ENCODE measurements at regions of chr1 and their contacts with region 1.

Region 1: DNA sequence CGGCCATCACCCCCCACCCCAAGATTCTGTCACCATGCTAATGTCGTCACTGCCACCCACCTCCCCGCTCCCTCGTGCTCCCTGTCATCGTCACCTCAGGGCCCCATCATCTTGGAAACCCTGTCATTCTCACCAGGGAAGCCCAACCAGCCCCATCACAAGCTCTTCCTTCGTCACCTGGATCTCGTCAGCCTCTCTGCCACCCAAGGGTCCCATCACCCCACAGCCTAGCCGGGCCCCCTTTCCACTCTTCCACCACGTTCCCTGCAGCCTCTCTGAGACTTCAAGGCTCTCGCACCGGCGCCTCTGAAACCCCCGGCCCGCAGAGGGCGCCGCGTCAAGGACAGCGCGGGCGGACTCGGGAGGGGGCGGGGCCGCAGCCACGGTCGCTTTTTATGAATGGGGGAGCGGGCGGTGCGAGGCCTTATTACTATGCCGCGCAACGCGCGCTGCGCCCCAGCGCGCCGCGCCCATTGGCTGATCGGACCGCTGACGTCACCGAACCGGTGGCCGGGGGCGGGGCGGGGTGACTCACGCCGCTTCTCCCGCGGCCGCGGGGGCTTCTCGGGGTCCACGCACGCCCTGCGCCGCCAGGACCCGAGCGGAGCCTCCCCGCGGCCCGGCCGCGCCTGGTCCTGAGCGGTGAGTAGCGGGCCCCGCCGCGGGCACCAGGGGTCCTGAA is at the start of gene GPR3:
- DNase-seq: peak; percentile 92
- ATAC-seq: peak; percentile 87
- H3K4me3 ChIP-seq: peak within 1 kb of the TSS; percentile 48
- H3K27ac ChIP-seq: peak within 1 kb of the TSS; percentile 55
- H3K4me1 ChIP-seq: peaks cover 32% of the 10 kb centered on the region
- H3K27me3 ChIP-seq: no peaks in the 10 kb centered on the region
- CTCF ChIP-seq: peak; percentile 57
- total RNA-seq, gene GPR3: 0.90 TPM

Region 2: GRCh38 chr1:27097484-27097917 is 294.7 kb before region 1 on chr1:
- intact Hi-C with region 1: no loop called
- DNase-seq: peak; percentile 87
- ATAC-seq: peak; percentile 84
- H3K4me3 ChIP-seq: no peak overlapping the region
- H3K27ac ChIP-seq: peak overlapping the region; percentile 76
- H3K4me1 ChIP-seq: peaks cover 27% of the 10 kb centered on the region
- H3K27me3 ChIP-seq: no peaks in the 10 kb centered on the region
- CTCF ChIP-seq: peak; percentile 98

Region 3: DNA sequence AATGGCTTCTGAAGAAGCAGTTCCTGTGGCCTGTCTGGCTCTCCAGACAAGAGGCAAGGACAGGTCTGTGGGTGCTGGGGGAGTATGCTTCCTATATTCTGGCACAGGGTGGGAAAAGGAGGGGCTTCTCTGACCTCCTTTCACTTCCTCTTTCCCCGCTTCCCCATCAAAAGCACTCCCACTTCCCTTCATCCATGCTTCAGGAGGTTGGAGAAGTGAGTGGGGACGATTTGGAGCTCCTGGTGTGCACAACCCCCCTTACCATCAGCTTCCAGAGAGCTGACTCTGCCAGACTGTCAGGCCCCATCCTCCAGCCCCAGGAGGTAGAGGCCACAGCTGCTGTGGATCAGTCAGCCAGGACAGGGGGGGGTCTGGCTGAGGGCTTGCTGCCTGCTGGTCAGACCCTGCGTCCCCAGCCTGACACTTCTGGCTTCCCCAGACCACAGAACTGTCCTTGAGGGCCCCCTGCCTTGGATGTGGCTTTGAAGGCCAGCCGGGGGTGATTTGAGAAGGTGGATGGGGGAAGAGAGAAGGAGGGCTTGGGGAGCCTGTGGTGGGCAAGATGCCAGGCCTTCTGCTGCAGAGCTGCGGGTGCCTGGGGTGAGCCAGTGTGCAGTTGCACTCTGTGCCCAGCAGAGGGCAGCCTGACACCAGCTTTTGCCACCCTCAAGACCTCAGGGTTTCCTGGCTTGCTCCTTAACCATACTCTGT is 91.7 kb before region 1 on chr1:
- intact Hi-C with region 1: loop called (anchors 2 kb)
- DNase-seq: peak; percentile 91
- ATAC-seq: peak; percentile 93
- H3K4me3 ChIP-seq: no peak overlapping the region
- H3K27ac ChIP-seq: peak overlapping the region; percentile 78
- H3K4me1 ChIP-seq: peaks cover 21% of the 10 kb centered on the region
- H3K27me3 ChIP-seq: no peaks in the 10 kb centered on the region
- CTCF ChIP-seq: peak; percentile 99

Region 4: GRCh38 chr1:27489501-27489909 is 97.3 kb after region 1 on chr1:
- intact Hi-C with region 1: no loop called
- DNase-seq: no peak
- ATAC-seq: peak; percentile 42
- H3K4me3 ChIP-seq: peak overlapping the region; percentile 74
- H3K27ac ChIP-seq: peak overlapping the region; percentile 98
- H3K4me1 ChIP-seq: peaks cover 47% of the 10 kb centered on the region
- H3K27me3 ChIP-seq: no peaks in the 10 kb centered on the region
- CTCF ChIP-seq: no peak

Region 5: GRCh38 chr1:27603681-27604578 is 211.7 kb after region 1 on chr1 and contains the start of gene AHDC1:
- intact Hi-C with region 1: loop called (anchors 10 kb)
- DNase-seq: peak; percentile 96
- ATAC-seq: peak; percentile 84
- H3K4me3 ChIP-seq: peak within 1 kb of the TSS; percentile 82
- H3K27ac ChIP-seq: peak within 1 kb of the TSS; percentile 81
- H3K4me1 ChIP-seq: peaks cover 38% of the 10 kb centered on the region
- H3K27me3 ChIP-seq: no peaks in the 10 kb centered on the region
- CTCF ChIP-seq: no peak
- total RNA-seq, gene AHDC1: 34.2 TPM

Region 6: GRCh38 chr1:27662707-27663393 is 270.6 kb after region 1 on chr1:
- intact Hi-C with region 1: loop called (anchors 10 kb)
- DNase-seq: peak; percentile 77
- ATAC-seq: peak; percentile 85
- H3K4me3 ChIP-seq: no peak overlapping the region
- H3K27ac ChIP-seq: peak overlapping the region; percentile 77
- H3K4me1 ChIP-seq: peaks cover 27% of the 10 kb centered on the region
- H3K27me3 ChIP-seq: no peaks in the 10 kb centered on the region
- CTCF ChIP-seq: peak; percentile 89